Gastrocnemius medialis (tissue), 4 donors: ENCODE measurements at regions of chr12 and their contacts with region 1.

Region 1: DNA sequence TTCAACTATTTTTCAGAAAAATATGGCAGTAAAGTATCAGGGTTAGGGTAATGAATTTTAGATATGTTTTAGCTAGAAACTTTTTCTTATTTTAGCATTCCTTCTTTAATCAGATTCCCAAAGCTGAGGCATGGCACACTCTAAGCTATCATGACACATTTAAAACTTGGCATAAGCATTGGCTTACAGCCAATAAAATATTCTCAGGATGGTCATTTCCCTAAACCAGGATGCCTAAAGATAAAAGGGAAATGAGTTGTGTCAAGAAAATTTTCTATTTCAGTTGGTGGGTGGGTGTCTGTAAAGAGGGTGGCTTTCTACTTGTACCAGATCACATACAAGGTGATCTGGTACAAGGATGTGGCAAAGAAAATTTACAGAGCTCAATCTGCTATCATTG is 47.8 kb downstream of the PEBP1 start:
- DNase-seq: no peak
- ATAC-seq: no peak
- H3K4me3 ChIP-seq: no peak overlapping the region
- H3K27ac ChIP-seq: peak overlapping the region; percentile 1 to 64 (median 41)
- H3K4me1 ChIP-seq: peaks cover 18 to 32% of the 10 kb centered on the region in 2 donors
- H3K27me3 ChIP-seq: no peaks in the 10 kb centered on the region
- CTCF ChIP-seq: no peak
- POLR2A ChIP-seq: no peak

Region 2: GRCh38 chr12:118061011-118061875 is 122.5 kb before region 1 on chr12 and contains the start of gene WSB2:
- in situ Hi-C with region 1: no loop called
- intact Hi-C with region 1: loop called (anchors 5 kb)
- DNase-seq: peak; percentile 58 to 67
- ATAC-seq: peak; percentile 65 to 66
- H3K4me3 ChIP-seq: peak within 1 kb of the TSS; percentile 82 to 94 (median 87)
- H3K27ac ChIP-seq: peak within 1 kb of the TSS; percentile 92 to 96 (median 96)
- H3K4me1 ChIP-seq: peaks cover 23 to 30% of the 10 kb centered on the region in 2 donors
- H3K27me3 ChIP-seq: no peaks in the 10 kb centered on the region
- CTCF ChIP-seq: no peak
- POLR2A ChIP-seq: peak; percentile 30 to 45
- total RNA-seq, gene WSB2: 83.5 to 133 (median 93.5) TPM

Region 3: GRCh38 chr12:118120579-118121363 is 62.9 kb before region 1 on chr12:
- in situ Hi-C with region 1: no loop called
- intact Hi-C with region 1: loop called (anchors 5 kb)
- DNase-seq: peak; percentile 48 to 67
- ATAC-seq: peak; percentile 77 to 91
- H3K4me3 ChIP-seq: no peak overlapping the region
- H3K27ac ChIP-seq: peak overlapping the region; percentile 16 to 54 (median 38)
- H3K4me1 ChIP-seq: peaks cover 0 to 9% of the 10 kb centered on the region in 2 donors
- H3K27me3 ChIP-seq: no peaks in the 10 kb centered on the region
- CTCF ChIP-seq: peak; percentile 38 to 83 (median 45)
- POLR2A ChIP-seq: no peak

Region 4: DNA sequence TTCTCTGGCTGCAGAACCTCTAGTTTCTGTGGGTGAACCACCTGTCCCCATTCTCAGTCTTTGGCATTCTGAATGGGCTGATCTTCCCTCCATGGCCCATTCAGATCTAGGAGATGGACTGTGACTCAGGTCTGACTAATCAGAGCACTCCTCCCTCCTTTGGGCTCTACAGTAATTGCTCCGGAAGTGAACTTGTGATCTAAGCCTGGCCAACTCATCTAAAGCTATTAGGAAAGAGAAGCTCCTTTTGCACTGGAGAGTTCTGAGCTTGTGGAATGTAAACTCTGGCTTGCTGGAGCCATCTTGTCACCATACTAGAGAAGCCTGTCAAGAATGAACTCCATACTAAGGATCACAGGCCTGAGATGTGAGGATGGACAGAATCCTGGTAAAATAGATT is 360.9 kb after region 1 on chr12:
- in situ Hi-C with region 1: no loop called
- intact Hi-C with region 1: no loop called
- DNase-seq: no peak
- ATAC-seq: peak; percentile 75 to 79
- H3K4me3 ChIP-seq: no peak overlapping the region
- H3K27ac ChIP-seq: peak overlapping the region in 3 of 4 donors; percentile 14 to 49 (median 44)
- H3K4me1 ChIP-seq: no peaks in the 10 kb centered on the region
- H3K27me3 ChIP-seq: no peaks in the 10 kb centered on the region
- CTCF ChIP-seq: no peak
- POLR2A ChIP-seq: no peak